ENCODE measurements at regions of chr3 and their contacts with region 1.

Region 1: GRCh38 chr3:129249276-129250065 is at the start of gene COPG1:
- DNase-seq: peak; percentile 73 to 90
- H3K4me3 ChIP-seq: peak within 1 kb of the TSS; percentile 75 to 93 (median 87)
- H3K27ac ChIP-seq: peak within 1 kb of the TSS; percentile 66
- H3K4me1 ChIP-seq: peaks cover 0 to 6% (median 1%) of the 10 kb centered on the region in 4 experiments; a peak in 4 of 7 replicates
- H3K27me3 ChIP-seq: no peaks in the 10 kb centered on the region
- CTCF ChIP-seq: peak in 1 of 3 experiments; percentile 7; a peak in 1 of 4 replicates
- EP300 ChIP-seq: no peak
- POLR2A ChIP-seq: peak; percentile 82 to 94
- RAD21 ChIP-seq: no peak
- total RNA-seq, gene COPG1: 104 and 106 TPM in 2 replicates

Region 2: DNA sequence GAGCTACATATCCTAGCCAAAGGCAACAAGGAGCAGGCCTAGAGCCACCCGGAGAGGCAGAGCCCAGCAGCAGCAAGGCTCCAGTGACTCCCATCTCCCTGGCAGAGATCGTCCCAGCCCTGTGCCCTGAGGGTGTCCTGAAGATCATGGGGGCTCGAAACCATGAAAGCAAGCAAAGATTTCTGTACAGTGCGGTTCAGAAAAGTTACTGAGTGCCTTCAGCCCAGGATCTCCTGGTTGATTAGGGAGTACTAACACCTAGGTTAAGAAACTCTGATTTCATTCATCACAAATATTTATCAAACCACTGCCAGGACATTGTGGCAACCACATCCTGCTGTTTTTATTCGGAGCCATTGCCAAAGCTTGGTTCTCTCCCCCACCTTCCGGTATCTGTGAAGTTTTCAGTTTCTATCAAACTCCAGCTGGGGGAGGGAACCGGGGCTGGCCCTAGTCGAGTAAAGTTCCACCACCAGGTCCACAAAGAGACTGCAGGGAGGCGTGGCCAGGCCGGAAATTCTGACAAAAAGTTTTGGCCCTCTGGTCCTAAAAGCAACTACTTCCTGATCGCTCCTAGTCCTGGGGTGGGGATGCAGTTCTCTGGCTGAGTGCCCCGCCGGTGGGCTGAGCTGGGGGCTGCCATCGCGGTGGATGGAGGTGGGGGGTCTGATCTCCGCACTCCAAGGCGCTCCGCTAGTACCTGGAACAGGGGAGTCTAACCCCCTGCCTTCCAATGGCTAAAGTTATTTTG is 129.0 kb before region 1 on chr3:
- CTCF ChIA-PET with region 1: interaction called, 10 read pairs
- POLR2A ChIA-PET with region 1: interaction called, 5 read pairs
- DNase-seq: peak; percentile 62 to 83
- H3K4me3 ChIP-seq: peak overlapping the region; percentile 68 to 82 (median 74)
- H3K27ac ChIP-seq: peak overlapping the region; percentile 86
- H3K4me1 ChIP-seq: peaks cover 12 to 21% (median 16%) of the 10 kb centered on the region in 4 experiments
- H3K27me3 ChIP-seq: no peaks in the 10 kb centered on the region
- CTCF ChIP-seq: peak in 2 of 3 experiments; percentile 7 to 23; a peak in 2 of 4 replicates
- EP300 ChIP-seq: no peak
- POLR2A ChIP-seq: peak; percentile 63 to 77
- RAD21 ChIP-seq: no peak; a peak in 1 of 4 replicates

Region 3: DNA sequence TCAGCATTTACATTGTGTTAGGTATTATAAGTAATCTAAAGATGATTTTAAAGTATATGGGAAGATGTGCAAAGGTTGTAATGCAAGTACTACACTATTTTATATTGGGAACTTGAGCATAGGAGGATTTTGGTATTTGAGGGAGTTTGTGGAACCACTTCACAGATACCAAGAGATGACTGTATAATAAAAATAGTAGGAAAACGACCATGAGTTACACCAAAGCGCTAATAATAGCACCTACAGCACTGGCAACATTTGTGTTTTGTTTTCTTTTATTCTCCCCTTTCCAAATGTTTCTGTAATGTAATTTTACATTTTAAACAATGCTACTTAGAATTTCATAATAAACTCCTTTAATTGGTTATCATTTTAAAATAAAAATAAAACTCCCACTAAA is 76.3 kb before region 1 on chr3:
- CTCF ChIA-PET with region 1: interaction called, 38 read pairs
- POLR2A ChIA-PET with region 1: interaction called, 5 read pairs
- DNase-seq: no peak
- H3K4me3 ChIP-seq: no peak overlapping the region
- H3K27ac ChIP-seq: no peak overlapping the region
- H3K4me1 ChIP-seq: no peaks in the 10 kb centered on the region
- H3K27me3 ChIP-seq: no peaks in the 10 kb centered on the region
- CTCF ChIP-seq: no peak
- EP300 ChIP-seq: no peak
- POLR2A ChIP-seq: no peak
- RAD21 ChIP-seq: no peak

Region 4: DNA sequence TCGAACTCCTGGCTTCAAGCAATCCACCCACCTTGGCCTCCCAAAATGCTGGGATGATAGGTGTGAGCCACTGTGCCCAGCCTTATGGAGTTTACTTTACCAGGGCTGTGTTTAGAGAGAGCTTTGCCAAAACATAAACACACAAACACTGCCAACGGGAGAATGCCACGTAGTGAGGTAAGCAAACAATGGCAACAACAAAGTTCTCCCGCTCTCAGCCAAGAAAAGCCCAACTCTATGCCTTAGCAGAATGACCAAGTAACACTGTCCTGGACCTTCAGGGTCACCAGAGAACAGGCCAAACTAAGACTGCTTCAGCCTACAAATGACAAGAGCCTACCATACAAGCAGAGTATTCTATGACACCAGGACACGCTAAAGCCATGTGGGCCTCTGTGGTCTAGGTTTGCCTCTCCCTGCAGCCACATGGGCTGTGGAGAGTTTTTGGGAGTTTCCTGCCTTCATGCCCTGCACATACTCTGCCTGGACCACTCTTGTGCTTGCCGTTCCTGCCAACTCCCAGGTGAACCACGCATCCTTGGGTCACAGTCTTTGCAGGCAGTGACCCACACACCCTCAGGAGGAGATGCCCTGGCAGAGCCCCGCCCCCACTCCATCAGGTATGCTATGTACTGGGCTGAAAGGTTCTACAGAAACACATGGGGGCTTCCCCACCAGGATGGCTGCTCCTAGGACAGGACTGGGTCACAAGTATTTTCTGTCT is 44.2 kb before region 1 on chr3:
- CTCF ChIA-PET with region 1: interaction called, 17 read pairs
- POLR2A ChIA-PET with region 1: no interaction called
- DNase-seq: peak in 1 of 2 experiments; percentile 50
- H3K4me3 ChIP-seq: no peak overlapping the region
- H3K27ac ChIP-seq: no peak overlapping the region
- H3K4me1 ChIP-seq: no peaks in the 10 kb centered on the region
- H3K27me3 ChIP-seq: no peaks in the 10 kb centered on the region
- CTCF ChIP-seq: no peak
- EP300 ChIP-seq: no peak
- POLR2A ChIP-seq: no peak
- RAD21 ChIP-seq: no peak

Region 5: GRCh38 chr3:129233538-129233937 is 15.9 kb before region 1 on chr3:
- CTCF ChIA-PET with region 1: interaction called, 35 read pairs
- POLR2A ChIA-PET with region 1: interaction called, 6 read pairs
- DNase-seq: no peak
- H3K4me3 ChIP-seq: no peak overlapping the region
- H3K27ac ChIP-seq: no peak overlapping the region
- H3K4me1 ChIP-seq: peaks cover 0 to 6% (median 6%) of the 10 kb centered on the region in 4 experiments; a peak in 6 of 7 replicates
- H3K27me3 ChIP-seq: no peaks in the 10 kb centered on the region; a peak in 1 of 7 replicates
- CTCF ChIP-seq: no peak
- EP300 ChIP-seq: no peak
- POLR2A ChIP-seq: no peak
- RAD21 ChIP-seq: no peak

Region 6: GRCh38 chr3:129399145-129399894 is 149.8 kb after region 1 on chr3:
- CTCF ChIA-PET with region 1: no interaction called
- POLR2A ChIA-PET with region 1: no interaction called
- DNase-seq: peak; percentile 63 to 72
- H3K4me3 ChIP-seq: peak overlapping the region; percentile 61 to 89 (median 83)
- H3K27ac ChIP-seq: peak overlapping the region; percentile 72
- H3K4me1 ChIP-seq: peaks cover 0 to 4% (median 0%) of the 10 kb centered on the region in 4 experiments; a peak in 3 of 7 replicates
- H3K27me3 ChIP-seq: no peaks in the 10 kb centered on the region; a peak in 1 of 7 replicates
- CTCF ChIP-seq: peak; percentile 58 to 85 (median 65)
- EP300 ChIP-seq: no peak
- POLR2A ChIP-seq: no peak
- RAD21 ChIP-seq: peak in 1 of 2 experiments; percentile 37; a peak in 2 of 4 replicates

Measured in H1 (cell line).